ENCODE measurements at regions of chr19 and their contacts with region 1.

Region 1: GRCh38 chr19:732148-733069 is 18.5 kb upstream of the MISP start:
- DNase-seq: no peak
- ATAC-seq: no peak

Region 2: GRCh38 chr19:662962-663681 is 69.3 kb before region 1 on chr19 and contains the start of gene RNF126:
- intact Hi-C with region 1: loop called in 1 of 2 experiments (anchors 2 kb)
- DNase-seq: peak; percentile 85 to 94
- ATAC-seq: peak; percentile 65
- total RNA-seq, gene RNF126: 60.1 to 73.1 TPM

Region 3: GRCh38 chr19:670609-671075 is 61.8 kb before region 1 on chr19:
- intact Hi-C with region 1: loop called (anchors 2 to 5 kb)
- DNase-seq: no peak
- ATAC-seq: no peak

Measured in left colon (tissue), 2 donors.